ENCODE measurements at regions of chr3 and their contacts with region 1.

Region 1: DNA sequence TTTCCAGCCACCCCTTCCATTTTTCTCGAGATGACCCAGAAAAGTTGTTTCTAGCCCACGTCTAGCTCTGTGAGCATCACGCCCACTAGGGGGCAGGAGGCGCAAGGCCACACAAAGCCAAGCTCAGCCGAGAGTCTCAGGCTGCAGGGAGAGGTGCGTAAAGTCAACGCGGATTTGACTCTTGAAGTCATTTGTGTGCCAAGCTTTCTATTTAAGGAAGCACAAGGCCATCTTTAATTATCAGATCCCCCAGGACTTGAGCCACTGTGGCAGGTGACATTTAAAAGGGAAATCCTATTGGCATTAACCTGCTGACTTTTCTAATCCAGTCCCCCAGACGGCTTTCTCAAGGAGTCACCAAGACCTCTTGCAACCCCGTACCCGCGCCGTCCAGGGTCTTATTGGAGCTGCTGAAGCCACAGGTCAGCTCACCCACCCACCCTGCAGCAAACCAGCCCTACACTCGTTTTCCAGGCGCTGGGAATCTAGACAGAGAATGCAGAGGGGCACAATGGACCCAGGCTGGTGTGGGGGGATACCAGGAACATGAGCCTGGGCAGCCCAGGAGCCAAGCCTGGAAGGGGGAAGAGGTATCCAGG is 62.1 kb downstream of the CAPN7 start:
- DNase-seq: peak; percentile 91
- H3K4me3 Mint-ChIP-seq: no peak overlapping the region
- H3K27ac Mint-ChIP-seq: peak overlapping the region; percentile 65
- H3K4me1 Mint-ChIP-seq: peaks cover 79% of the 10 kb centered on the region
- H3K27me3 Mint-ChIP-seq: no peaks in the 10 kb centered on the region

Region 2: DNA sequence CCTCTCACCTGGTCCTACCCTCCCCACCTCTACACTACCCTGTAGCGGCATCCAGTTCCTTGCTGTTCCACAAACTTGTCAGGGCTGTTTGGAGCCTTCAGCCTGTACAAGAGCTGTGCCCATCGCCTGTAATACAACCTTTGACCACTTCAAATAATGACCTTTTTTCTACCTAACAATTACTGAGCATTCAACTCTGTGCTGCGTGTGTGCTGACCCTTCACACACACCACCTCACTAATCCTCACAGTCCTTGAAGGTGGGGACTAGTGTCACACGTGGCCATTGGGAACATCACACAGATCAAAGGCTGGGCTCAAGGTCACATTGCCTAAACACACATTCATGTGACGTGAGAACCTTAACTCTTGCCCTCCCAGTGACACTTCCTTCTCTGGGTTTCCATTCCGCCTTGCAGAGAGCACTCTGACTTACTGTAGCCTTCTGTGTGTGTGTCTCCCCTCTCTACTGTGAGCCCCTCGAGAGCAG is 590.1 kb before region 1 on chr3:
- CTCF ChIA-PET with region 1: no interaction called
- POLR2A ChIA-PET with region 1: no interaction called
- intact Hi-C with region 1: no loop called
- DNase-seq: no peak
- H3K4me3 Mint-ChIP-seq: no peak overlapping the region
- H3K27ac Mint-ChIP-seq: no peak overlapping the region
- H3K4me1 Mint-ChIP-seq: no peaks in the 10 kb centered on the region
- H3K27me3 Mint-ChIP-seq: no peaks in the 10 kb centered on the region

Region 3: DNA sequence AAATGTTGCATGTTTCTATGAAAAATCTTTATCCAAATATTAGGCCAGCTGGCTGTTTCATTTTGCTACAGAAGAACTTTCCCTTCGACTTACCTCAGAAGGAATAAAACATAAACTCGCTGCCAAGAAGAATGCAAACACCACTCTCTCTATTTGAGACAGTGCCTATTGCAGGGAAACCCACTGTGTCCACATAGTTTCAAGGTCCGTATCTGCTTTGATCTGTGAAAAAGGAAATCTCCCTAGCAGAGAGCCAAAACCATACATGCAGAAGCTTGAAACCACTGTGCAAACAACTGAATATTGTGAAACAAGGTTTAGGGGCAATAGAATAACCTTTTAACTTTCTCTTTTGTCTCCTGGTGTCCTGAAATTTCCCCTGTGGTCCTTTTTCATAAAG is 97.0 kb before region 1 on chr3:
- CTCF ChIA-PET with region 1: no interaction called
- POLR2A ChIA-PET with region 1: no interaction called
- intact Hi-C with region 1: no loop called
- DNase-seq: no peak
- H3K4me3 Mint-ChIP-seq: no peak overlapping the region
- H3K27ac Mint-ChIP-seq: no peak overlapping the region
- H3K4me1 Mint-ChIP-seq: no peaks in the 10 kb centered on the region
- H3K27me3 Mint-ChIP-seq: peaks cover 7% of the 10 kb centered on the region

Region 4: GRCh38 chr3:15256861-15257341 is 11.2 kb before region 1 on chr3:
- CTCF ChIA-PET with region 1: interaction called, 20 read pairs
- POLR2A ChIA-PET with region 1: interaction called, 3 read pairs
- intact Hi-C with region 1: no loop called
- DNase-seq: no peak
- H3K4me3 Mint-ChIP-seq: no peak overlapping the region
- H3K27ac Mint-ChIP-seq: no peak overlapping the region
- H3K4me1 Mint-ChIP-seq: peaks cover 14% of the 10 kb centered on the region
- H3K27me3 Mint-ChIP-seq: no peaks in the 10 kb centered on the region

Region 5: DNA sequence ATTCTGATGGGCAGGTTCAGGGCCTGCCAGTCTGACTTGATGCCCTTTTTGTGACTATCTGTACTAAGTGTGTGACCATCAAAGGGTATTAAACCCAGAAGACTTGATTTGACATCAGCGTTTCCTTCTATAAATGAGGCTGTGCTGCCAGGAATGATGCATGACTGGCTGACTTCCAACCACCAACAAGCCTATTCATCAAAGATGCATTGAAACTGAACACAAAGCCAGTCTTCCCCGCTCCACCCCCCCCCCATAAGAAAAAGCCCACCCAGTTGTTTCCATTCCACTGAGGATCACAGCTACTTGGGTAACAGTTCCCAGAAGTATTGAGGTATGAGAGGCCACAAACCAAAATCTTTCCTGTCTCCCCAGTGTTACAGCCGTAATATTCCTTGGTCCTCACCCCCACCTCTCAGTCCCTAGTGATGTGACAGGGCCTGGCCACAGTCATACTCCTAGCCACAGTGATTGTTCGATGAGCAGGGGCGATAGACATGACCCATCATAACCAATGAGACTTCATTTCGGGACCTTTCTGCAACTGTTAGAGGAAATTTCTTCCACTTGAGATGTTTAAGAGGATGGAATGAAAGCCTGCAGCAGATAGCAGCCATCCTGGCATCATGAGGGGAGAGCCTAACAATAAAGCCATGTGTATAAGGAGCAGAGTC is 41.7 kb after region 1 on chr3:
- CTCF ChIA-PET with region 1: interaction called, 36 read pairs
- POLR2A ChIA-PET with region 1: interaction called, 17 read pairs
- intact Hi-C with region 1: loop called (anchors 1 kb)
- DNase-seq: peak; percentile 82
- H3K4me3 Mint-ChIP-seq: peak overlapping the region; percentile 61
- H3K27ac Mint-ChIP-seq: peak overlapping the region; percentile 98
- H3K4me1 Mint-ChIP-seq: peaks cover 78% of the 10 kb centered on the region
- H3K27me3 Mint-ChIP-seq: no peaks in the 10 kb centered on the region

Region 6: DNA sequence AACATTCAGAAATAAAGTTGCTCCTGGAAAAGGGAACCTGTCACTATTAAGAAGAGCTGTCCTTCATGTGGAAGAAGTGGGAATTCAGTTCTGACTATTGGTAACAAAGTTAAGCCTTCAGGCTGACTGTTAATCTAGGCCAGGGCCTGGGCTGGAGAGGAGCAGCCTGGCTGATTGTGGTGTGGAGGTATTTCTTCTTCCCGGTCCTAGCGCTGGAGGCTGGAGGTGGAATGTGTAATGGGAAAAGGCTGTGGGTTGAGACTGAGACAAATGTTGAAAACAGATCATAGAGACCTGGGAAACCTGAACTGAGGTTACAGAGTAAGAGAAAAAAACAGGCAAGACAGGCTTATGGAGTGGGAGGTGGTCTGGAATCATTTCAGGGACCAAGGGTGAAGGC is 88.1 kb after region 1 on chr3:
- CTCF ChIA-PET with region 1: interaction called, 46 read pairs
- POLR2A ChIA-PET with region 1: interaction called, 17 read pairs
- intact Hi-C with region 1: loop called (anchors 1 kb)
- DNase-seq: no peak
- H3K4me3 Mint-ChIP-seq: peak overlapping the region; percentile 27
- H3K27ac Mint-ChIP-seq: peak overlapping the region; percentile 76
- H3K4me1 Mint-ChIP-seq: peaks cover 42% of the 10 kb centered on the region
- H3K27me3 Mint-ChIP-seq: no peaks in the 10 kb centered on the region

Region 7: DNA sequence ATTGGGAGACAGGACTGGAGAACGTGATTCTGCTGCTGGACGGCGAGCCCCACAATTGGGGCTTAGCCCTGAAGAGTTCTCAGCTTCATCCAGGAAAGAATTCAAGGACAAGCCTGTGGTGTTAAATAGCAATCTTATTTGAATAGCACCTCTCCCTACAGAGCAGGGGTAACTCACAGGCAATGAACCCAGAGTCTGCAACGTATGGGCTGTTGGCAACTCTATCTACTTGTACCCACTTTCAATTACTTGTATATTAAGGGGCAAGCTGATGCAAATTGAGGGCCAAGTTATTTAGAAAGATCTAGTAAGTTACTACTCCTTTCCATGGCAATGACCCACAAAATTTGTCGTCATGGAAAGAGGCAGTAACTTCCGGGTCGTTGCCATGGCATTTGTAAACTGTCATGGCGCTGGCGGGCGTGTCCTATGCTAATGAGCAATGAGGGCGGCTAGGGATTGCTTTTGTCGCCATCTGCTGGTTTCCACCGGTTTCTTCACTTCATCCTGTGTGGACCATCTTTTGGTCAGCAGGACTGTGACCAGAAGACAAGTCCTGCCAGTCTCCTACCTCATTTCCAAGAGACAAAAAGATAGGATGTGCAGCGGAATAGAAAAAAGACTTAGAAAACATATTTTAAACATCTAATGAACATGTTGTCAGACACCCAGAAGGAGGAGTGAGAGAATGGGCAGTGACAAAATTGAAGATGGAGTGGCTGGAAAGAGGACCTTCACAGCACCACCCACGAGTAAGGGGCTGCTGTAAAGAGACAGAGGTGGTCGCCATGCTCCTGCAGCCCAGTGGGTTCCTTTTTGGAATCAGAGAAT is 110.0 kb after region 1 on chr3:
- CTCF ChIA-PET with region 1: interaction called, 151 read pairs
- POLR2A ChIA-PET with region 1: interaction called, 4 read pairs
- intact Hi-C with region 1: loop called (anchors 1 kb)
- DNase-seq: peak; percentile 97
- H3K4me3 Mint-ChIP-seq: peak overlapping the region; percentile 20
- H3K27ac Mint-ChIP-seq: peak overlapping the region; percentile 79
- H3K4me1 Mint-ChIP-seq: peaks cover 18% of the 10 kb centered on the region
- H3K27me3 Mint-ChIP-seq: no peaks in the 10 kb centered on the region

Region 8: GRCh38 chr3:15557511-15557946 is 289.4 kb after region 1 on chr3:
- CTCF ChIA-PET with region 1: interaction called, 14 read pairs
- POLR2A ChIA-PET with region 1: no interaction called
- intact Hi-C with region 1: loop called (anchors 2 kb)
- DNase-seq: peak; percentile 75
- H3K4me3 Mint-ChIP-seq: no peak overlapping the region
- H3K27ac Mint-ChIP-seq: no peak overlapping the region
- H3K4me1 Mint-ChIP-seq: peaks cover 21% of the 10 kb centered on the region
- H3K27me3 Mint-ChIP-seq: no peaks in the 10 kb centered on the region